ENCODE measurements at regions of chr12 and their contacts with region 1.

Region 1: DNA sequence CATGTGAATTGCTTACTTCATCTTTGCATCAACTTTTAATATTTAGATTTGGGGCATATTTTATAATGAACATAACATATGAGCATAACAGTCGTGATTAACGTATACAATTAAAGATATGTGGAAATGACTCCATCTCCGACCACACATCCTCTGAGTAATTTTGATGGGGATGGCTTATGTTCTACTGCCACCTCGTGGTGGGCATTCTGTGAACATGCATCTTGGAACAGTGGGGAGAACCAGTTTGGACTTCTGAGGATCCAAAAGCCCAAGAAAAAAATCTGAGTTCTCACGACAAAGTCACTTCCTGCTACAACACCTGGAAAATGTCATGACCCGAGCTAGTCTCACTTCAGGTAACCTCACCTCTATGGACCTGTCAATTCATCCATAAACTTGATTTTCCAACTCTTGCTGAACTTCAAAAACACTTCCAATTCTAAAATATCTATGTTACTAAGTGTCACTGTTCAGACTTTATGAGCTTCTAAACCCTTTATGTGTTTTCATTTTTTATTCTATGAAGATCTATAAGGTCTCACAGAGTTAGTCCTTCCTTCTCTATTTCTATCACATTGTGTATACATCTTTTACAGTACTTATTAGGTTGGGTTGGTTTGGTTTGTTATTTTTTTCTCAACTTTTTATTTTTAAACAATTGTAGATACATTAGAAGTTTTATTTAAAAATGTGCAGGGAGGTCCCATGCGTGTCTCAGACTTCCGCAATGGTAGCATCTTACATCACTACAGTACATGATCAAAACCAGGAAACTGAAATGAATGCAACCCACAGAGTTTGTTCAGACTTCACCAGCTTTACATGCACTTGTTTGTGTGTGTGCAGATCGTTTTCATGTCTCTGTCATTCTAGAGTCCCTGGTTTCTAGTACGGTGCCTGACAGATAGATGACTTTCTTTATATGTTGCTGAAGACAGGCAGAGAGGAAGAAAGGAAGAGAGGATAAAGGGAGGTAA is 38.2 kb upstream of the STAB2 start:
- DNase-seq: peak; percentile 71
- H3K4me3 Mint-ChIP-seq: no peak overlapping the region
- H3K27ac Mint-ChIP-seq: no peak overlapping the region
- H3K4me1 Mint-ChIP-seq: peaks cover 10% of the 10 kb centered on the region
- H3K27me3 Mint-ChIP-seq: peaks cover 15% of the 10 kb centered on the region

Region 2: GRCh38 chr12:102883204-102883799 is 665.6 kb before region 1 on chr12:
- CTCF ChIA-PET with region 1: interaction called, 17 read pairs
- POLR2A ChIA-PET with region 1: no interaction called
- DNase-seq: peak; percentile 35
- H3K4me3 Mint-ChIP-seq: no peak overlapping the region
- H3K27ac Mint-ChIP-seq: no peak overlapping the region
- H3K4me1 Mint-ChIP-seq: no peaks in the 10 kb centered on the region
- H3K27me3 Mint-ChIP-seq: no peaks in the 10 kb centered on the region

Region 3: DNA sequence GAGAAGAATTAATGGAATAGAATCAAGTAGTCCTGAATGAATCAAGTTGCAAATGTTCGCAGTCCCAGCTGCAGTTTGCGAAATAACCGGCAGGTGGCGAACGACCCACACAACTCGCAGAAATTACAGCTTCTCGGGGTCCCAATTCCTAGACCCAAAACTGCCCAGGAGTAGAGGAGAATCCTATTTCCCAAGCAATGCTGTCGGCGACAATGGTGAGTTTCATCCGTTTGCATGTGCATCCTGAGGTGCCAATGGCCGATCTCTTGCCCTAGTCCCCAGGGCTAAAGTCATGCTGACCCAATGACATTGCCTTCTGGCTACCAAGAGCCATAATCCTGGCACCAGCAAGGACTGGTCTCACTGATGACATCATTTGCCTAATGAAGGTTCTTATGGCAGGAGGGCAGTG is 600.0 kb before region 1 on chr12:
- CTCF ChIA-PET with region 1: interaction called, 56 read pairs
- POLR2A ChIA-PET with region 1: no interaction called
- DNase-seq: peak; percentile 51
- H3K4me3 Mint-ChIP-seq: no peak overlapping the region
- H3K27ac Mint-ChIP-seq: no peak overlapping the region
- H3K4me1 Mint-ChIP-seq: peaks cover 16% of the 10 kb centered on the region
- H3K27me3 Mint-ChIP-seq: peaks cover 40% of the 10 kb centered on the region

Region 4: DNA sequence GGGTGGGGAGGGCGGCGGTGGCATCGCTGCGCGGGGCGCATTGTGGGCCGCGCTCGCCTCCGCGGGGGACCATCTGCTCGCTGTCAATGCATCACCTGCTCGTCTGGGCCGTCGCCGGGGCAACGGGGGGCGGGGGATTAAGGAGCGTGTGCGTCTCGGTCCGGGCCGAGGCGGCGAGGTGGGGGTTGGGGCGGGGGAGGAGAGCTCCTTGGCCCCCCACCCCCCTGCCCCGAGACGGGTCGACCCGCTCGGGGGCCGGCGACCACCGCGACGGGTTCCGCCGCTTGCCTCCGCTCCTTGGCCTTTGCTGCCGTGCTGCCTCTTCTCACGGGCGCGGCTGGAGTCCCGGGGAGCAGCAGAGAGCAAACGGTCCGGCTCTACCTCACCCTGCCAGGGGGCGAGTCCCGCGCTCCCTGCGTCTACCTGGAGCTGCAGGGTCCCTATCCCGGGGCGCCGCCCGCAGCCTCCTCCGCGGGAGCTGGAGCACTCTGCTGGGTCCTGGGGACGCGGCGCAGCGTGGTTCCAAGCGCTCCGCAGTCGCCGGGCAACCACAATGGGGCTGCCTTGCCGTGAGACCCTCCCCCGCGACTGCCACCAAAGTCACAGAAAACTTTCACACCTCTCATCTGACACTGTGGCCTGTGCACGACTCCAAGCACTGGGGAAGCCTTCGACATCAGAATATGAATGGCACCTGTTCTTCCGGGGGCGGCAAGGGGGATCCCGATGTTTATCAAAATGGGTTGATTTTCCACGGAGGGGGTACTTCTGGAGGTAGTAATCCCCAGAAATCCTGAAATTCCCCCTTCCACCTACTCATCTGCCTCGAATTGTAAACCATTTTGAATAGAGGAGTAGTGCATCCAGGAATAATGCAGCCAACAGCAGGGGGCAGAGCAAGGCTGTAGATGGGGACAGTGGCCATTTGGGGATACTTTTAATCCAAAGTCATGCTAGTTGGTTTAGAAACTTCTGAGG is 53.1 kb before region 1 on chr12 and contains the start of gene C12orf42:
- CTCF ChIA-PET with region 1: interaction called, 13 read pairs
- POLR2A ChIA-PET with region 1: no interaction called
- DNase-seq: peak; percentile 35
- H3K4me3 Mint-ChIP-seq: peak within 1 kb of the TSS; percentile 55
- H3K27ac Mint-ChIP-seq: no peak within 1 kb of the TSS
- H3K4me1 Mint-ChIP-seq: peaks cover 17% of the 10 kb centered on the region
- H3K27me3 Mint-ChIP-seq: peaks cover 40% of the 10 kb centered on the region
- total RNA-seq, gene C12orf42: 0.25 to 0.48 TPM